ENCODE measurements at regions of chr14 and their contacts with region 1.

Region 1: GRCh38 chr14:78254911-78255461 is 84.8 kb downstream of the NRXN3 start:
- DNase-seq: no peak
- H3K4me3 Mint-ChIP-seq: no peak overlapping the region
- H3K27ac Mint-ChIP-seq: peak overlapping the region; percentile 78
- H3K4me1 Mint-ChIP-seq: peaks cover 12% of the 10 kb centered on the region
- H3K27me3 Mint-ChIP-seq: peaks cover 5% of the 10 kb centered on the region

Region 2: GRCh38 chr14:78005325-78005724 is 249.7 kb before region 1 on chr14:
- intact Hi-C with region 1: loop called (anchors 2 kb)
- DNase-seq: peak; percentile 18
- H3K4me3 Mint-ChIP-seq: no peak overlapping the region
- H3K27ac Mint-ChIP-seq: no peak overlapping the region
- H3K4me1 Mint-ChIP-seq: peaks cover 19% of the 10 kb centered on the region
- H3K27me3 Mint-ChIP-seq: peaks cover 8% of the 10 kb centered on the region

Region 3: GRCh38 chr14:78227248-78228077 is 27.5 kb before region 1 on chr14:
- intact Hi-C with region 1: loop called (anchors 2 kb)
- DNase-seq: no peak
- H3K4me3 Mint-ChIP-seq: no peak overlapping the region
- H3K27ac Mint-ChIP-seq: no peak overlapping the region
- H3K4me1 Mint-ChIP-seq: peaks cover 3% of the 10 kb centered on the region
- H3K27me3 Mint-ChIP-seq: no peaks in the 10 kb centered on the region

Region 4: GRCh38 chr14:78240567-78240966 is 14.4 kb before region 1 on chr14:
- intact Hi-C with region 1: no loop called
- DNase-seq: no peak
- H3K4me3 Mint-ChIP-seq: no peak overlapping the region
- H3K27ac Mint-ChIP-seq: no peak overlapping the region
- H3K4me1 Mint-ChIP-seq: no peaks in the 10 kb centered on the region
- H3K27me3 Mint-ChIP-seq: peaks cover 2% of the 10 kb centered on the region

Region 5: DNA sequence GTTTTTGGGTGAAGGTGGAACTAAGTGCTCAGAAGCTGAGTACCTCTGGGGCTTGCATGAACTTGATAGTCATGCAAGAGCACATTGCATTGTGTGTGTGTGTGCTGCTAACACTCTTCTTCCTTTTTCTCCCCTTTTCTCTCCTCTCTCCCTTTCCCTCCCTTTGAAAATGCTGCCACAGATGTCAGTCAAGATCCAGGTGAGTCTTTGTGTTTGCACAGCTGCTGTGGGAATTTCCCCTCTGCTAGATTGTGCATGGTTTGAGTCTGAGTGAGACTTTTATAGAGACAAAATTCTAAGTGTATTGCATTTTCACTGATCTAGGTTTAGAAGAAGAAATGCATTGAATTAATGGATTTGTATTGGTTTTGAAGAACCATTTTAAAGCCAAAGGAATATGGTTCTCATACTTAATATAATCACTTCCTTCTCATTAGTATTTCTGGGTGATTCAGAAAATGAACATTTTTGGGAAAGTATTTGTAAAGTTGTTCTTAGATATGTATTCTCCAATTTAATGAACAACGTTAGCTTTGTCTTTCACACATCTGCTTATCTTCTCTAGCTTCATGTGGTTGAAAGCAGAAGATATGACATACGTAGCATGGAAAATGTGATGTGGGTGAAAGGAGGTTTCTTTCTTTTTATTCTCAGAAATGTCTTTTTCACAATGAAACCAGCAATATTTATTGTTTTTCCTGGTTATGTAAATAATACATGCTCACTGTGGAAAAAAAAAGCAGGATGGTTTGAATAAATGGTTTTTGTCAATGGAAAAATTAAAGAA is 23.7 kb after region 1 on chr14:
- intact Hi-C with region 1: loop called (anchors 1 kb)
- DNase-seq: no peak
- H3K4me3 Mint-ChIP-seq: no peak overlapping the region
- H3K27ac Mint-ChIP-seq: peak overlapping the region; percentile 20
- H3K4me1 Mint-ChIP-seq: peaks cover 6% of the 10 kb centered on the region
- H3K27me3 Mint-ChIP-seq: no peaks in the 10 kb centered on the region